ENCODE measurements at regions of chr20 and their contacts with region 1.

Region 1: GRCh38 chr20:47418061-47418912 is 61.8 kb upstream of the ZMYND8 start:
- DNase-seq: no peak
- ATAC-seq: no peak
- H3K4me3 ChIP-seq: no peak overlapping the region
- H3K27ac ChIP-seq: peak overlapping the region in 1 of 10 donors; percentile 7
- H3K4me1 ChIP-seq: peaks cover 0 to 43% (median 16%) of the 10 kb centered on the region in 9 donors
- H3K27me3 ChIP-seq: no peaks in the 10 kb centered on the region
- CTCF ChIP-seq: no peak

Region 2: DNA sequence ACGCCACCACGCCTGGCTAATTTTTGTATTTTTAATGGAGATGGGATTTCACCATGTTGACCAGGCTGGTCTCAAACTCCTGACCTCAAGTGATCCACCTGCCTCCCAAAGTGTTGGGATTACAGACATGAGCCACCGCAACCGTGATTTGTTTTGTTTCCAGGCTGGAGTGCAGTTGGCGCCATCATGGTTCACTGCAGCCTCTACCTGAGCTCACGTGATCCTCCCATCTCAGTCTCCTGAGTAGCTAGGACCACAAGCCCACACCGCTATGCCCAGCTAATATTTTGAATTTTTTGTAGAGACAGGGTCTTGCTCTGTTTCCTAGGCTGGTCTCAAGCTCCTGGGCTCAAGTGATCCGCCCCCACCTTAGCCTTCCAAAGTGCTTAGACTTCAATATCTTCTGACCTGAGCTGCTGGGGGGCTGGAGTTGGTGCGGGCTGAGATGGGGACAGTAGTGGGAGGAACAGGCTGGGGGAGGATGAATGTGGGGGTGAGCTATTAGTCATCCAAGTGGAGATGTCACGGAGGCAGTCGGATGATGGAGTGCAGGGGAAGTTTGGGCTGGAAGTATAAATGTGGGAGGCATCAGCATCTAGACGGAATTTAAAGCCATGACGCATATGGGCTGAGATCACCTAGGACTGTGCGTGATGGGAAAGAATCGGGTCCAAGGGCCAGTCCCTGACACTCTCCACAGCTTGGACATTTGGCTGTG is 38.7 kb before region 1 on chr20:
- intact Hi-C with region 1: no loop called
- DNase-seq: no peak
- ATAC-seq: no peak
- H3K4me3 ChIP-seq: no peak overlapping the region
- H3K27ac ChIP-seq: no peak overlapping the region
- H3K4me1 ChIP-seq: peaks cover 0 to 17% (median 9%) of the 10 kb centered on the region in 9 donors
- H3K27me3 ChIP-seq: no peaks in the 10 kb centered on the region
- CTCF ChIP-seq: no peak

Region 3: GRCh38 chr20:47453142-47453782 is 35.0 kb after region 1 on chr20:
- intact Hi-C with region 1: loop called in 1 of 10 experiments (anchors 5 kb)
- DNase-seq: no peak
- ATAC-seq: peak in 2 of 8 donors; percentile 12 to 65
- H3K4me3 ChIP-seq: no peak overlapping the region
- H3K27ac ChIP-seq: peak overlapping the region in 2 of 10 donors; percentile 13 to 21
- H3K4me1 ChIP-seq: peaks cover 0 to 14% (median 0%) of the 10 kb centered on the region in 9 donors
- H3K27me3 ChIP-seq: no peaks in the 10 kb centered on the region
- CTCF ChIP-seq: no peak

Region 4: DNA sequence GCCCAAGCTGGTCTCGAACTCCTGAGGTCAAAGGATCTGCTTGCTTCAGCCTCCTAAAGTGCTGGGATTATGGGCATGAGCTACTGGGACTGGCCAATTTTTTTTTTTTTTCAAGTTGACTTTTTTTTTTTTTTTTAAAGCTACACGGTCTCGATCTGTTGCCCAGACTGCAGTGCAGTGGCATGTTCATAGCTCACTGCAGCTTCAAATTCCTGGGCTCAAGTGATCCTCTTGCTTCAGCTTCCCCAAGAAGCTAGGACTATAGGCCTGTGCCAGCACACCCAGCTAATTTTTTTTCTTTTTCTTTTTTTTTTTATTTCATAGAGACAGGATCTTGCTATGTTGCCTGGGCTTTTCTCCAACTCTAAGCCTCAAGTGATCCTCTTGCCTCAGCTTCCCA is 142.9 kb after region 1 on chr20:
- intact Hi-C with region 1: no loop called
- DNase-seq: no peak
- ATAC-seq: peak; percentile 19 to 63 (median 42)
- H3K4me3 ChIP-seq: no peak overlapping the region
- H3K27ac ChIP-seq: peak overlapping the region in 1 of 10 donors; percentile 5
- H3K4me1 ChIP-seq: peaks cover 3 to 97% (median 74%) of the 10 kb centered on the region in 9 donors
- H3K27me3 ChIP-seq: no peaks in the 10 kb centered on the region
- CTCF ChIP-seq: no peak

Measured in heart right ventricle (tissue), 16 donors.